ENCODE measurements at regions of chr2 and their contacts with region 1.

Region 1: DNA sequence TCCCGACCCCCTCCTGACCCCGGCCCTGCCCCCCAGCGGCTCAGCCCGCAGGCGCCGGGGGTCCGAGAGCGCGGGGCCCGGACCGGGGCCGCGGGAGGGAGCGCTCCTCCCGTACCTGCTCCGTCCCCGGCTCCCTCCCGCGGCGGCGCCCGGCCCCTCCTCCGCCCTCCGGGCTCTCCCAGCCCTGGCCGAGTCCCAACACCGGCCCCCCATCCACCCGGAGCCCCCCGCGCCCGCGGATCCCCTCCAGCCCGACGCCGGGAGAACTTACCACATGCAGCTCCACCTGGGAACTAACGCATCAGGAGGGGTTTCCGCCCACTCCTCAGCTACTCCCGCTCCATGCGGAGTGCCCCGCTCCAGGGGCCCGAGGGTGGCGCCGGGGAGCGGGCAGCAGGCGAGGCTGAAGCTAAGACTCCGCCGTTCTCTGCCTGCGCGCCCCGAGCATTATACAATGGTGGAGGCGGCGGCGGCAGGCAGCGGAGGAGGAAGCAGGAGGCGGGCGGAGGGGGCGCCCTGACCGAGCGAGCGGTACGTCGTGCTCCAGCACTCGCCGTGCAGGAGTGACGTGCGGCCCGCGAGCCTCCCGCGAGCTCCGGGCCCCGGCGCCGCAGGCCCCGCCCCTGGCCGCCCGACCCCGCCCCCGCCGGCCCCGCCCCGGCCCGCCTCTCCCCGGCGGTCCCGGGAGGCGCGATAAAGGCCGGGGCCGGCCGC is at the start of gene SERTAD2:
- DNase-seq: peak; percentile 91 to 96 (median 94)
- ATAC-seq: peak; percentile 74
- H3K4me3 ChIP-seq: peak within 1 kb of the TSS; percentile 91
- H3K27ac ChIP-seq: peak within 1 kb of the TSS; percentile 96
- H3K4me1 ChIP-seq: peaks cover 12 to 40% of the 10 kb centered on the region in 2 experiments
- H3K27me3 ChIP-seq: no peaks in the 10 kb centered on the region
- CTCF ChIP-seq: peak; percentile 14 to 40 (median 16); a peak in 3 of 6 replicates
- EP300 ChIP-seq: no peak
- POLR2A ChIP-seq: peak; percentile 93
- RAD21 ChIP-seq: peak in 1 of 2 experiments; percentile 30; a peak in 2 of 4 replicates
- polyA plus RNA-seq, gene SERTAD2: 3.0 to 3.4 TPM

Region 2: GRCh38 chr2:64523666-64524603 is 129.6 kb before region 1 on chr2 and contains the start of gene AFTPH:
- CTCF ChIA-PET with region 1: no interaction called
- POLR2A ChIA-PET with region 1: interaction called, 4 read pairs
- in situ Hi-C with region 1: no loop called
- intact Hi-C with region 1: loop called (anchors 2 kb)
- DNase-seq: peak; percentile 97 to 99 (median 98)
- ATAC-seq: peak; percentile 97
- H3K4me3 ChIP-seq: peak within 1 kb of the TSS; percentile 85
- H3K27ac ChIP-seq: peak within 1 kb of the TSS; percentile 74
- H3K4me1 ChIP-seq: peaks cover 0 to 5% of the 10 kb centered on the region in 2 experiments; a peak in 1 of 5 replicates
- H3K27me3 ChIP-seq: peaks cover 0 to 4% of the 10 kb centered on the region in 2 experiments; a peak in 3 of 5 replicates
- CTCF ChIP-seq: no peak
- EP300 ChIP-seq: no peak
- POLR2A ChIP-seq: peak; percentile 83
- RAD21 ChIP-seq: peak in 1 of 2 experiments; percentile 17; a peak in 1 of 4 replicates
- polyA plus RNA-seq, gene AFTPH: 8.0 to 9.3 TPM

Region 3: DNA sequence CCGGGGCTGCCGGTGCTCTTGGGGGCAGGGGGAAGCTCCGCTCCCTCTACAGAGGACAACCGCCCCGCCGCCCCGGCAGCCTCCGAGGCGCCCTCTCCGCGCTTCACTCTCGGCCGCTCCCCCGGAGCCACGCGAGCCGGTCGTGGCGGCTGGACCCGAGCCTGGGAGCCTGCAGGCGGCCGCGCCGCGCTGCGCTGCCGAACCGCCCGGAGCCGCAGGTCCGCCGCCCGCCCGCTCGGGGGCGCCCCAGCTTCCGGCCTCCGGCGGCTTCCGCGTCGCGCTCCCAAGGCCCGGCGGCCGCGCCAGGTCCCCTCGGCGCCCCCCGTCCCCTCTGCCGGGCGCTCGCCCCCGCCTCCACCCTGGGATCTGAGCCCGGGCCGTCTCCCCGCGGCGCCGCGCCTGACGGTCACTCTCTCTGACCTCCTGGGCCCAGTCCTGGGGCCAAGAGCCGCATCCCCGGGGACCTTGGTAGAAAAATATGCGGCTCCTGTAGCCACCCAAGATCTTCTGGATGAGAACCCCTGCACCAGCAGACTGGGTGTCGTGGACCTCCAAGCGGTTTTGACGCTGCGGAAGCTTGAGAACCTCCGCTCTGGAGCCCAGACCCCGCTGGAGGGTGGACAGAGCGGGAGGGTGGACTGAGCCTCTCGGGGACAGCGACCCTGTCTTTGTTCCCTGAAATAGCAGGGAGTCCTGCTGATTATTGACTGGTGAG is 44.1 kb before region 1 on chr2:
- CTCF ChIA-PET with region 1: no interaction called
- POLR2A ChIA-PET with region 1: interaction called, 7 read pairs
- in situ Hi-C with region 1: no loop called
- intact Hi-C with region 1: loop called (anchors 2 kb)
- DNase-seq: peak; percentile 82 to 94 (median 91)
- ATAC-seq: peak; percentile 85
- H3K4me3 ChIP-seq: peak overlapping the region; percentile 60
- H3K27ac ChIP-seq: peak overlapping the region; percentile 78
- H3K4me1 ChIP-seq: peaks cover 21 to 30% of the 10 kb centered on the region in 2 experiments; a peak in 4 of 5 replicates
- H3K27me3 ChIP-seq: no peaks in the 10 kb centered on the region
- CTCF ChIP-seq: peak in 2 of 3 experiments; percentile 55 to 69; a peak in 3 of 6 replicates
- EP300 ChIP-seq: 0 out of 2 replicates have a peak, but pooled peaks have one; percentile 5
- POLR2A ChIP-seq: peak; percentile 77
- RAD21 ChIP-seq: peak in 1 of 2 experiments; percentile 61; a peak in 3 of 4 replicates

Region 4: GRCh38 chr2:64637000-64637635 is 16.4 kb before region 1 on chr2:
- CTCF ChIA-PET with region 1: no interaction called
- POLR2A ChIA-PET with region 1: interaction called, 10 read pairs
- in situ Hi-C with region 1: no loop called
- intact Hi-C with region 1: no loop called
- DNase-seq: no peak
- ATAC-seq: no peak
- H3K4me3 ChIP-seq: no peak overlapping the region
- H3K27ac ChIP-seq: no peak overlapping the region
- H3K4me1 ChIP-seq: peaks cover 22 to 51% of the 10 kb centered on the region in 2 experiments
- H3K27me3 ChIP-seq: no peaks in the 10 kb centered on the region
- CTCF ChIP-seq: no peak
- EP300 ChIP-seq: no peak
- POLR2A ChIP-seq: no peak
- RAD21 ChIP-seq: no peak

Region 5: DNA sequence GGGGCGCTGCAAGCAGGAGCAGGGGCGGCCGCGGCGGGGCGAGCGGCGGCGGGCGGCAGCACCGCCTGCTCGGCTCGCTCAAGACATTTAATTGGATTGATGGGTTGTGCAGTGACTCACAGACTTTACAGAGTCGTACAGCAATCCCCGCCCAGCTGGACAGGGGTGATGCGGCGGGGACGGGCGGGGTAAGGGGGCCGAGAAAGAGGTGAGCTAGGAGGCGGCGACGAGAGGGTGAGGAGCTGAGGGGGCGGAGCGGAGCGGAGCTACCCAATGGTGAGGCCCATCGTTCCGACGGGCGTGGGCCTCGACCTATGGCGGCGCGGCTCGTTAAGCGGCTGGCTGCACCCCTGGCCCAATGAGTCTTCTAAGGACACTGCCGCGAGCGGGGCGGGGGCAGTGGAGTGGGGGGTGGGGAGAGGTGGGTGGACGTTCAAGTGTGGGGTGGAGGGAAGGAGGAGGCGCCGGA is 97.3 kb after region 1 on chr2:
- CTCF ChIA-PET with region 1: no interaction called
- POLR2A ChIA-PET with region 1: interaction called, 32 read pairs
- in situ Hi-C with region 1: no loop called
- intact Hi-C with region 1: loop called (anchors 2 kb)
- DNase-seq: peak; percentile 97 to 99 (median 97)
- ATAC-seq: peak; percentile 91
- H3K4me3 ChIP-seq: peak overlapping the region; percentile 79
- H3K27ac ChIP-seq: peak overlapping the region; percentile 84
- H3K4me1 ChIP-seq: peaks cover 11 to 18% of the 10 kb centered on the region in 2 experiments; a peak in 4 of 5 replicates
- H3K27me3 ChIP-seq: no peaks in the 10 kb centered on the region
- CTCF ChIP-seq: peak in 1 of 3 experiments; percentile 53; a peak in 2 of 6 replicates
- EP300 ChIP-seq: no peak
- POLR2A ChIP-seq: no peak
- RAD21 ChIP-seq: peak in 1 of 2 experiments; percentile 55; a peak in 2 of 4 replicates

Region 6: GRCh38 chr2:64859312-64860212 is 206.1 kb after region 1 on chr2:
- CTCF ChIA-PET with region 1: no interaction called
- POLR2A ChIA-PET with region 1: interaction called, 13 read pairs
- in situ Hi-C with region 1: no loop called
- intact Hi-C with region 1: no loop called
- DNase-seq: peak; percentile 76 to 92 (median 91)
- ATAC-seq: peak; percentile 92
- H3K4me3 ChIP-seq: peak overlapping the region; percentile 29
- H3K27ac ChIP-seq: peak overlapping the region; percentile 67
- H3K4me1 ChIP-seq: peaks cover 28 to 33% of the 10 kb centered on the region in 2 experiments
- H3K27me3 ChIP-seq: no peaks in the 10 kb centered on the region
- CTCF ChIP-seq: peak in 2 of 3 experiments; percentile 9 to 22; a peak in 1 of 6 replicates
- EP300 ChIP-seq: no peak
- POLR2A ChIP-seq: peak; percentile 68; the same call in 1 of the 2 replicates
- RAD21 ChIP-seq: peak in 1 of 2 experiments; percentile 22; a peak in 2 of 4 replicates

Region 7: DNA sequence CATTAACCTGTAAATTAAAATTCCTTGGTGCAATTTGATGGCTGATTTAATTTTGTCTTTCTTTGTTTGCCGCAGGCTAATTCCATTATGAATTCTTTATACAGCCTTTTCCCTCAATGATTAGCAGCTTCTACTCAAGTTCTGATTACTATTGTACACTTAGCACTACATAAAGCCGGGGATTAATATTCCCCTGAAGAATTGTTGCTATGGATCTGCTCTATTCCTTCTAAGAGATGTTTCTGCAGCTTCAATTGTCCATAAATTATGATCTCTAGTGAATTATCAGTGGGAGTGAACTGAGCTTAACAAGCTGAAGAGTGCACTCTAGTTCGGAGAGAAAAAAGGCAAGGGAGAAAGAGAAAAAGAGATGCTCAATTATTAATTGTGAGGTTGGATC is 1212.6 kb after region 1 on chr2:
- CTCF ChIA-PET with region 1: no interaction called
- POLR2A ChIA-PET with region 1: no interaction called
- in situ Hi-C with region 1: no loop called
- intact Hi-C with region 1: no loop called
- DNase-seq: no peak
- ATAC-seq: no peak
- H3K4me3 ChIP-seq: no peak overlapping the region
- H3K27ac ChIP-seq: no peak overlapping the region
- H3K4me1 ChIP-seq: no peaks in the 10 kb centered on the region; a peak in 1 of 5 replicates
- H3K27me3 ChIP-seq: peaks cover 10 to 11% of the 10 kb centered on the region in 2 experiments; a peak in 4 of 5 replicates
- CTCF ChIP-seq: no peak
- EP300 ChIP-seq: no peak
- POLR2A ChIP-seq: no peak
- RAD21 ChIP-seq: no peak

Measured in K562 (cell line).